Heart left ventricle (tissue), 16 donors: ENCODE measurements at regions of chr19 and their contacts with region 1.

Region 1: GRCh38 chr19:56538254-56538760 is 441 bp upstream of the ZFP28 start:
- DNase-seq: peak; percentile 93 to 96 (median 94)
- ATAC-seq: peak; percentile 98 to 99 (median 98)
- H3K4me3 ChIP-seq: peak overlapping the region; percentile 52 to 94 (median 82)
- H3K27ac ChIP-seq: peak overlapping the region; percentile 88 to 98 (median 96)
- H3K4me1 ChIP-seq: peaks cover 0 to 20% (median 10%) of the 10 kb centered on the region in 12 donors
- H3K27me3 ChIP-seq: no peaks in the 10 kb centered on the region
- CTCF ChIP-seq: no peak
- POLR2A ChIP-seq: peak in 1 of 2 donors; percentile 49

Region 2: GRCh38 chr19:56477429-56478338 is 60.6 kb before region 1 on chr19:
- intact Hi-C with region 1: loop called in 4 of 10 experiments (anchors 1 to 5 kb)
- DNase-seq: peak; percentile 93 to 97 (median 94)
- ATAC-seq: peak; percentile 96 to 98 (median 96)
- H3K4me3 ChIP-seq: peak overlapping the region; percentile 58 to 95 (median 80)
- H3K27ac ChIP-seq: peak overlapping the region; percentile 4 to 93 (median 84)
- H3K4me1 ChIP-seq: peaks cover 0 to 29% (median 14%) of the 10 kb centered on the region in 12 donors
- H3K27me3 ChIP-seq: no peaks in the 10 kb centered on the region
- CTCF ChIP-seq: no peak
- POLR2A ChIP-seq: peak in 1 of 2 donors; percentile 77

Region 3: GRCh38 chr19:56491399-56491798 is 46.9 kb before region 1 on chr19:
- intact Hi-C with region 1: no loop called
- DNase-seq: no peak
- ATAC-seq: no peak
- H3K4me3 ChIP-seq: no peak overlapping the region
- H3K27ac ChIP-seq: no peak overlapping the region
- H3K4me1 ChIP-seq: peaks cover 0 to 5% (median 0%) of the 10 kb centered on the region in 12 donors
- H3K27me3 ChIP-seq: no peaks in the 10 kb centered on the region
- CTCF ChIP-seq: no peak
- POLR2A ChIP-seq: no peak

Region 4: GRCh38 chr19:56567274-56568120 is 29.2 kb after region 1 on chr19 and contains the start of gene ZNF470:
- intact Hi-C with region 1: loop called in 3 of 10 experiments (anchors 1 to 2 kb)
- DNase-seq: peak; percentile 95 to 98 (median 96)
- ATAC-seq: peak; percentile 98 to 100 (median 99)
- H3K4me3 ChIP-seq: peak within 1 kb of the TSS; percentile 75 to 98 (median 87)
- H3K27ac ChIP-seq: peak within 1 kb of the TSS; percentile 74 to 97 (median 90)
- H3K4me1 ChIP-seq: peaks cover 0 to 15% (median 6%) of the 10 kb centered on the region in 12 donors
- H3K27me3 ChIP-seq: no peaks in the 10 kb centered on the region
- CTCF ChIP-seq: peak in 1 of 12 donors; percentile 15
- POLR2A ChIP-seq: peak in 1 of 2 donors; percentile 63
- total RNA-seq, gene ZNF470: 1.7 to 7.1 (median 3.2) TPM